ENCODE measurements at regions of chr16 and their contacts with region 1.

Region 1: DNA sequence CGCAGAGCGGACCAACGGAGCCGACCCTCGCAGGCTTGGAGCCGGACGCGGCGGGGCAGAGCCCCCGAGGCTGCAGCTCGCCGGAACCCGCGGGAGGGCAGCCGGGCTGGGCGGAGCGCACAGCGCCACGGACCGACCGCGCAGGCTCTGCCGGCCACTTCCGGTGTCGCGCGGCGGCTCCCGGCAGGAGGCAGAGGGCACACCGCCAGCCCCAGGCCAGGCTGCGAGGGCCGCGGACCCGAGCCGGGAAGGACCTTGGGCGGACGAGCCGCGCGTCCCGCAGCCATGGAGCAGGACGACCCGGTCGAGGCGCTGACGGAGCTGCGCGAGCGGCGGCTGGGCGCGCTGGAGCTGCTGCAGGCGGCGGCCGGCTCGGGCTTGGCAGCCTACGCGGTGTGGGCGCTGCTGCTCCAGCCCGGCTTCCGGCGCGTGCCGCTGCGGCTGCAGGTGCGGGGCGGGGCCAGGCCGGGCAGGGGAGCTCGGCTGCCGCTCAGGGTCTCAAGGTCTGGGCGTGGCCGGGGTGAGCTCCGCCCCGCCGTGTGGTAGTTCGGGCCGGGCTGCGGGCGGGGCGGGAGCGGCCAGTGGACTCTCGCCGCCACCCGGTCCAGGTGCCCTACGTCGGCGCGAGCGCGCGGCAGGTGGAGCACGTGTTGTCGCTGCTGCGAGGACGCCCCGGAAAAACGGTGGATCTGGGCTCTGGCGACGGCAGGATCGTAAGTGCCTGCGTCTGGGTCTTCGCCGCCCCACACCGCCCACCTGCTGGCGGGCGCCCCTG is at the start of gene ANTKMT:
- DNase-seq: peak; percentile 68 to 84 (median 83)
- H3K4me3 ChIP-seq: peak within 1 kb of the TSS; percentile 67
- H3K4me3 Mint-ChIP-seq: peak within 1 kb of the TSS; percentile 83 to 97 (median 89)
- H3K27ac ChIP-seq: peak within 1 kb of the TSS; percentile 82
- H3K27ac Mint-ChIP-seq: peak within 1 kb of the TSS; percentile 74 to 98 (median 94)
- H3K4me1 ChIP-seq: peaks cover 31% of the 10 kb centered on the region
- H3K4me1 Mint-ChIP-seq: peaks cover 18 to 49% (median 19%) of the 10 kb centered on the region in 3 donors
- H3K27me3 ChIP-seq: no peaks in the 10 kb centered on the region
- H3K27me3 Mint-ChIP-seq: no peaks in the 10 kb centered on the region
- total RNA-seq, gene ANTKMT: 64.2 to 72.0 TPM

Region 2: GRCh38 chr16:685967-686366 is 35.2 kb before region 1 on chr16:
- CTCF ChIA-PET with region 1: no interaction called
- POLR2A ChIA-PET with region 1: interaction called, 12 read pairs
- DNase-seq: no peak
- H3K4me3 ChIP-seq: no peak overlapping the region
- H3K4me3 Mint-ChIP-seq: peak overlapping the region in 6 of 7 donors; percentile 5 to 55 (median 40)
- H3K27ac ChIP-seq: no peak overlapping the region
- H3K27ac Mint-ChIP-seq: peak overlapping the region in 2 of 8 donors; percentile 38 to 54
- H3K4me1 ChIP-seq: peaks cover 45% of the 10 kb centered on the region
- H3K4me1 Mint-ChIP-seq: peaks cover 18 to 65% (median 28%) of the 10 kb centered on the region in 3 donors
- H3K27me3 ChIP-seq: no peaks in the 10 kb centered on the region
- H3K27me3 Mint-ChIP-seq: no peaks in the 10 kb centered on the region

Region 3: GRCh38 chr16:706189-707061 is 14.8 kb before region 1 on chr16:
- CTCF ChIA-PET with region 1: interaction called, 11 read pairs
- POLR2A ChIA-PET with region 1: interaction called, 3 read pairs
- DNase-seq: no peak
- H3K4me3 ChIP-seq: no peak overlapping the region
- H3K4me3 Mint-ChIP-seq: peak overlapping the region in 3 of 7 donors; percentile 29 to 81 (median 41)
- H3K27ac ChIP-seq: no peak overlapping the region
- H3K27ac Mint-ChIP-seq: no peak overlapping the region
- H3K4me1 ChIP-seq: no peaks in the 10 kb centered on the region
- H3K4me1 Mint-ChIP-seq: peaks cover 0 to 13% (median 4%) of the 10 kb centered on the region in 3 donors
- H3K27me3 ChIP-seq: peaks cover 70% of the 10 kb centered on the region
- H3K27me3 Mint-ChIP-seq: peaks cover 36 to 51% of the 10 kb centered on the region in 2 donors

Region 4: GRCh38 chr16:740764-741505 is 19.8 kb after region 1 on chr16 and contains the start of gene CIAO3:
- CTCF ChIA-PET with region 1: interaction called, 332 read pairs
- POLR2A ChIA-PET with region 1: interaction called, 9 read pairs
- DNase-seq: peak; percentile 86 to 95 (median 89)
- H3K4me3 ChIP-seq: peak within 1 kb of the TSS; percentile 71
- H3K4me3 Mint-ChIP-seq: peak within 1 kb of the TSS; percentile 71 to 92 (median 81)
- H3K27ac ChIP-seq: peak within 1 kb of the TSS; percentile 78
- H3K27ac Mint-ChIP-seq: peak within 1 kb of the TSS in 5 of 8 donors; percentile 45 to 87 (median 57)
- H3K4me1 ChIP-seq: peaks cover 10% of the 10 kb centered on the region
- H3K4me1 Mint-ChIP-seq: peaks cover 0 to 15% (median 1%) of the 10 kb centered on the region in 3 donors
- H3K27me3 ChIP-seq: no peaks in the 10 kb centered on the region
- H3K27me3 Mint-ChIP-seq: no peaks in the 10 kb centered on the region
- total RNA-seq, gene CIAO3: 34.8 to 37.9 TPM

Region 5: GRCh38 chr16:788394-789126 is 67.4 kb after region 1 on chr16 and contains the start of gene CHTF18:
- CTCF ChIA-PET with region 1: interaction called, 108 read pairs
- POLR2A ChIA-PET with region 1: interaction called, 16 read pairs
- DNase-seq: peak; percentile 89 to 94 (median 94)
- H3K4me3 ChIP-seq: peak within 1 kb of the TSS; percentile 67
- H3K4me3 Mint-ChIP-seq: peak within 1 kb of the TSS; percentile 81 to 90 (median 84)
- H3K27ac ChIP-seq: peak within 1 kb of the TSS; percentile 69
- H3K27ac Mint-ChIP-seq: peak within 1 kb of the TSS in 7 of 8 donors; percentile 57 to 85 (median 63)
- H3K4me1 ChIP-seq: peaks cover 4% of the 10 kb centered on the region
- H3K4me1 Mint-ChIP-seq: peaks cover 0 to 25% (median 5%) of the 10 kb centered on the region in 3 donors
- H3K27me3 ChIP-seq: no peaks in the 10 kb centered on the region
- H3K27me3 Mint-ChIP-seq: no peaks in the 10 kb centered on the region
- total RNA-seq, gene CHTF18: 121 to 122 TPM

Measured in CD8-positive, alpha-beta memory T cell (primary cell).